ENCODE measurements at regions of chr6 and their contacts with region 1.

Region 1: GRCh38 chr6:89371849-89372505 is 19.5 kb upstream of the UBE2J1 start:
- DNase-seq: peak; percentile 84
- H3K4me3 Mint-ChIP-seq: no peak overlapping the region
- H3K27ac Mint-ChIP-seq: peak overlapping the region; percentile 83
- H3K4me1 Mint-ChIP-seq: peaks cover 57% of the 10 kb centered on the region
- H3K27me3 Mint-ChIP-seq: no peaks in the 10 kb centered on the region

Region 2: GRCh38 chr6:89352278-89353117 is 19.5 kb before region 1 on chr6 and contains the start of gene UBE2J1:
- CTCF ChIA-PET with region 1: interaction called, 26 read pairs
- POLR2A ChIA-PET with region 1: interaction called, 6 read pairs
- DNase-seq: peak; percentile 71
- H3K4me3 Mint-ChIP-seq: peak within 1 kb of the TSS; percentile 96
- H3K27ac Mint-ChIP-seq: peak within 1 kb of the TSS; percentile 97
- H3K4me1 Mint-ChIP-seq: peaks cover 75% of the 10 kb centered on the region
- H3K27me3 Mint-ChIP-seq: no peaks in the 10 kb centered on the region
- total RNA-seq, gene UBE2J1: 25.9 to 30.9 TPM

Region 3: GRCh38 chr6:89360415-89360999 is 11.5 kb before region 1 on chr6:
- CTCF ChIA-PET with region 1: interaction called, 18 read pairs
- POLR2A ChIA-PET with region 1: no interaction called
- DNase-seq: no peak
- H3K4me3 Mint-ChIP-seq: no peak overlapping the region
- H3K27ac Mint-ChIP-seq: no peak overlapping the region
- H3K4me1 Mint-ChIP-seq: peaks cover 64% of the 10 kb centered on the region
- H3K27me3 Mint-ChIP-seq: no peaks in the 10 kb centered on the region

Region 4: DNA sequence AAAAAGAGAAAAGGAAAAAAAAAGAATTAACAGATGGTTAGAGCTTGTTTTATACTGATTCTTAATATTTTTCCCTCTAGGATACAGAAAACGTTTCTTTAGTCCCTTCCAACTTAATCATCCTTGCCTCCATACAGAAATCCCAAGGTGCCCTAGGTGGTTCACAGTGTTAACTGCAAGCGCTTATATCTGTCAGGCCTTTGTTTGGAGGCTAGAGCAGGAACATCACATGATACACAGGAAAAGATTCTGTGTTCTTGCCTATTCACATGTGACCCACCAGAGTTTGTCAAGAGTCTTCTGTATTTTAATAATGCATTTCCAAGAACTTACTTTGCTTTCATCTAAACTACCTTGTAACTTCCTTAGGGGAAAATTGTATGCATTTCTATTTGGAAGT is 92.3 kb after region 1 on chr6:
- CTCF ChIA-PET with region 1: no interaction called
- POLR2A ChIA-PET with region 1: no interaction called
- DNase-seq: no peak
- H3K4me3 Mint-ChIP-seq: no peak overlapping the region
- H3K27ac Mint-ChIP-seq: no peak overlapping the region
- H3K4me1 Mint-ChIP-seq: no peaks in the 10 kb centered on the region
- H3K27me3 Mint-ChIP-seq: peaks cover 4% of the 10 kb centered on the region

Measured in activated CD4-positive, alpha-beta T cell treated with anti-CD3 and anti-CD28 coated beads, Interleukin-2, amount 10 ng/mL, durations not matched to agents 7 days and 5 days (primary cell).